HepG2 (cell line): ENCODE measurements at regions of chr6 and their contacts with region 1.

Region 1: DNA sequence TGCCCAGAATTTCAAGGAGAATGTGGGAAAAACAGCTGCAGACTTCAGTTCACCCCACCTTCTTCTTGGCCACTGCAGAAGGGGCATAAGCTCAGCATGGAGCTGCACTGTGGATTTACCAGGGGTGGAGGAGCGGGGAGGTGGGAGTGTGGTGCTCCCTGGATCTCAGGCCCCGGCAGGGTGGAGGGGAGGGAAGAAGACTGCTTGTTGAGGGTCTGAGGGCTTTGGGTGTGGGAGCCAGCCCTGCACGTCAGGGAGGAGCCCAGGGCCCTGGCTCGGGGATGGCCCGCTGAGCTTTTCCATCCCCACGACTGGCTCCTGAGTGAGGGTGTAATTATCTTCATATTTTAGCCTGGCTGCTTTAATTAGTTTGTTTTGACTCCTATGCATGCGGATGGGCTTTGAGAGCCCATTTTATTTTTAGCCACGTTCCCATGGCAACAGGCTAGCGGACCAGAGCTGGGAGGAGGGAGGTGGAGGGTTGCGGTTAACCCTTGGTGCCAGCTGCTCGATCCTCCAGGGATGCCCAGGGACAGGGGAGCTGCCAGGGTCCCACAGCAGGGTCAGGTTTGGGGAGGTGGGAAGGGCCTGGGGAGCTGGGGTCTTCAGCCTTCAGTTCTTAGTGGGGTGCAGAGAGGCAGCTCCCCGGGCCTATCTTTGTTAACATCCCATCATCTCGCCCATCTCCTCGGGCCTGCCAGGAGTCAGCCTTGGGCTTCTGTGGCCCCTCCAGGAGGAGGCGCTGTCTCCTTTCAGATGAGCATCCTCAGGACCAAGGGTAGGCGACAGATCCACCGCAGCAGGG is 68.2 kb downstream of the RAB44 start:
- DNase-seq: peak; percentile 76
- ATAC-seq: peak; percentile 93
- H3K4me3 ChIP-seq: no peak overlapping the region
- H3K27ac ChIP-seq: no peak overlapping the region
- H3K4me1 ChIP-seq: no peaks in the 10 kb centered on the region
- H3K27me3 ChIP-seq: peaks cover 8 to 60% of the 10 kb centered on the region in 2 experiments
- CTCF ChIP-seq: peak; percentile 98
- EP300 ChIP-seq: no peak
- POLR2A ChIP-seq: no peak
- RAD21 ChIP-seq: peak; percentile 96

Region 2: DNA sequence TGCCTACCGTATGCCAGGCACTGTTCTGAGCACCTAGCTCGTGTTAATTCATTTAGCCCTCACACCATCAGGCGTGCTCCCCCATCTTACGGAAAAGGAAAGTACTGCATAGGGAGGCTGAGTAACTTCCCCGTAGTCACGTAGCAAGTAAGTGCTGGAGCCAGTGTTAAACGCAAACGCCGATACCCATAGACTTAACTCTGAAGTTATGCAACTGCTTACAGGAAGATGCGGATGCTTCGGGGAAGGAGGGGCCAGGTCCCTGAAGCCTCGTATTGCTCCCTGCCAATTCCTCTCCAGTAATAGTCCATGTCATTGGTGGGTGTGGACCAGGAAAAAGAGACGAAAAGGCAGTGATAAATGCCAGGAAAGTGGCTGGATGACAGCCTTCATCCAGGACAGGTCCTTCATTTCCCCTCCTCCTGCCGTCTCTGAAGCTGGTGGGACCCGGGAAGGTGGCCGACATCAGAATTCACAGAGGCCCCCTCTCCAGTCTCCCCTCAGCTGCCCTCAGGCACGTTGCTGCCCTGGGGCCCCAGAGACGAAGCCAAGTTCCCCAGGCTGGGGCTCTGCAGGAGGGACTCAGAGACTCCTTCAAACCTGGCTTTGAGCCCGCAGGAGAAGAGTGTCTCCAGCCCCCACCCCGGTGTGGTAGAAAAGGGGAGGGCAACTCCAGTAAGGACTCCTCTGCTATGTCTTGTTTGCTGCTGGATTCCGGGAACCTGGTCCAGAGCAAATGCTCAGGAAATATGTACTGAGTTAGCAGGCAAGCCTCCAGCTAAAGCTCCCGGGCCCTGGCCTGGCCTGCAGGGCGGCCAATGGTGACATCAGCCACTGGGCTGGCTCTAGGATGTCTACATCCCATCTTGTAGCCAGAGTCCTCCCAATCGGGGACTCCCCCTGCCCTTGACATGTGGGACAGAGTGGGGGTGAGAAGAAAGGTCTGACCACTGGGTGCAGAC is 30.4 kb before region 1 on chr6:
- CTCF ChIA-PET with region 1: no interaction called
- POLR2A ChIA-PET with region 1: no interaction called
- in situ Hi-C with region 1: no loop called
- intact Hi-C with region 1: no loop called
- DNase-seq: no peak
- ATAC-seq: peak; percentile 32; the same call in 2 of the 3 replicates
- H3K4me3 ChIP-seq: no peak overlapping the region
- H3K27ac ChIP-seq: no peak overlapping the region
- H3K4me1 ChIP-seq: no peaks in the 10 kb centered on the region
- H3K27me3 ChIP-seq: peaks cover 16 to 81% of the 10 kb centered on the region in 2 experiments
- CTCF ChIP-seq: no peak
- EP300 ChIP-seq: no peak
- POLR2A ChIP-seq: no peak
- RAD21 ChIP-seq: no peak

Region 3: GRCh38 chr6:36914227-36914794 is 148.5 kb after region 1 on chr6:
- CTCF ChIA-PET with region 1: interaction called, 5 read pairs
- POLR2A ChIA-PET with region 1: no interaction called
- in situ Hi-C with region 1: no loop called
- intact Hi-C with region 1: loop called (anchors 1 kb)
- DNase-seq: peak; percentile 85
- ATAC-seq: peak; percentile 99
- H3K4me3 ChIP-seq: no peak overlapping the region
- H3K27ac ChIP-seq: peak overlapping the region; percentile 1
- H3K4me1 ChIP-seq: peaks cover 14% of the 10 kb centered on the region
- H3K27me3 ChIP-seq: no peaks in the 10 kb centered on the region
- CTCF ChIP-seq: peak; percentile 65
- EP300 ChIP-seq: no peak
- POLR2A ChIP-seq: no peak
- RAD21 ChIP-seq: peak; percentile 26; the same call in 1 of the 2 replicates